ENCODE measurements at regions of chr18 and their contacts with region 1.

Region 1: DNA sequence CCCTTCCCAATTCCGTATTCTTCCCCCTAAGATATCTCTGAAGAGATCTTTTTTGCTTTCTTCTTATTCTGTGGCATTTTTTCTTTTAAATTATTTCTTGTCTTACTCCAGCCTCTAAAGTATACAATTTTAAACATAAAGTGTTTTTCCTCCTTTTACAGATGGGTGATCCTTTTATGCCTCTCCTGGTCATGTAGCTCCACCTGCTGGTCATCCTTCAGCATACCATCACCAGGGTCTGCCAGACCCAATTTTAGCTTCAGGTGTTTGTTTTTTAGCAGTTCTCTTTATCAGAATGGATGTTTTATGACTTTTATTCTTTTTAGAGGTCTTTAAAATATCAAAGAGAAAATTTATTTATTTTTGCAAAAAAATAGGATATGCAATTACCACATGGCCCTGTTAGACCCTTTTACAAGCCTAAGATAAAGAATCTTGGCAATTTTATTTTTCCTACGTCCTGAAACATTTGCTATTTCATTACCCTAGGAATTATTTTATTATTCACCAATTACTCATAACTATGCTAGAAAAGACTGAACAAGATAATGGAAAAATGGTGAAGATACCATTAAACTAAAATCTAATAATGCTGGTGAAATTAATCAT is 55.5 kb downstream of the PIGN start:
- DNase-seq: peak; percentile 69
- ATAC-seq: peak; percentile 53
- H3K4me3 Mint-ChIP-seq: no peak overlapping the region
- H3K27ac Mint-ChIP-seq: no peak overlapping the region
- H3K4me1 Mint-ChIP-seq: peaks cover 7% of the 10 kb centered on the region
- H3K27me3 Mint-ChIP-seq: no peaks in the 10 kb centered on the region

Region 2: GRCh38 chr18:61581578-61582201 is 549.7 kb before region 1 on chr18:
- CTCF ChIA-PET with region 1: interaction called, 12 read pairs
- DNase-seq: peak; percentile 63
- ATAC-seq: peak; percentile 80
- H3K4me3 Mint-ChIP-seq: no peak overlapping the region
- H3K27ac Mint-ChIP-seq: no peak overlapping the region
- H3K4me1 Mint-ChIP-seq: peaks cover 5% of the 10 kb centered on the region
- H3K27me3 Mint-ChIP-seq: peaks cover 31% of the 10 kb centered on the region

Region 3: DNA sequence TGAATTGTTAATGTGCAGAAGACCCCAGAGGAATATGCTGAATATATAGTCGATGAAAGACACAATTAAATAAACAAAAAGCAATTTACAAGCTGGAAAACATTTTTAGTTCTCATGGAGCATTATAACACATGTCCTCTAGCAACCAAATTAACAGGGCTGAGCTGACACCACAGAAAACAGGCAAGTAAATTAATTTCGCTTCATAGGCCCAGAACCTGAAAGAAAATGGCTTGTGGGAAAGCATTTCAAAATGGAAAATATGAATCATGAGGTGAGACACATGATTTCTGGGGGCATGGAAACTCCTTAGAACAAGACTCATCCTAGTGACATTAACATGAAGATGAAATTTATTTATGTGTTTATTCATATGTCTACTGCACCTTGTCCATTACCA is 213.6 kb before region 1 on chr18:
- CTCF ChIA-PET with region 1: no interaction called
- DNase-seq: no peak
- ATAC-seq: no peak
- H3K4me3 Mint-ChIP-seq: no peak overlapping the region
- H3K27ac Mint-ChIP-seq: no peak overlapping the region
- H3K4me1 Mint-ChIP-seq: peaks cover 6% of the 10 kb centered on the region
- H3K27me3 Mint-ChIP-seq: peaks cover 17% of the 10 kb centered on the region

Region 4: GRCh38 chr18:62118328-62118727 is 13.1 kb before region 1 on chr18:
- CTCF ChIA-PET with region 1: interaction called, 12 read pairs
- DNase-seq: no peak
- ATAC-seq: no peak
- H3K4me3 Mint-ChIP-seq: no peak overlapping the region
- H3K27ac Mint-ChIP-seq: no peak overlapping the region
- H3K4me1 Mint-ChIP-seq: no peaks in the 10 kb centered on the region
- H3K27me3 Mint-ChIP-seq: no peaks in the 10 kb centered on the region

Region 5: DNA sequence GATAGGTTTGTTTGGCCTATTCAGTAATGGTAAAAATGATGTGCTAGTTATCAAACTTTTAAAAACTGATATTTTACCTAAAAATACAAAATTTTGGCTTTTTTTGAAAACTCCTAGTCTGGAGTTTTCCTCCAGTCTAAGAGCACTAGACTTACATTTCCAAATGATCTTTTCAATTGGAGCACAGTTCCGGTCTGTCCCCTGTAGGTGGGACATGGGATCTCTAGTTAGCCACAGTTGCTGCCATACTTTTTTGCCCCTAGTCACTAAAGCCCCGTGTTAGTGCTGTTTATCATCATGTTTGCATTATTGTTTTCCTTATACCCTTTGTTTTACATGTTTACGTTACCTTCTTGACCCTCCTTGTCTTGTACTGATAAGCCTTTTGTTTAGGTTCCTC is 108.1 kb after region 1 on chr18:
- CTCF ChIA-PET with region 1: no interaction called
- DNase-seq: no peak
- ATAC-seq: no peak
- H3K4me3 Mint-ChIP-seq: no peak overlapping the region
- H3K27ac Mint-ChIP-seq: no peak overlapping the region
- H3K4me1 Mint-ChIP-seq: peaks cover 13% of the 10 kb centered on the region
- H3K27me3 Mint-ChIP-seq: no peaks in the 10 kb centered on the region